ENCODE measurements at regions of chr20 and their contacts with region 1.

Region 1: GRCh38 chr20:56411759-56412472 is at the start of gene CASS4:
- DNase-seq: peak; percentile 63 to 74 (median 68)
- H3K4me3 ChIP-seq: peak within 1 kb of the TSS; percentile 24 to 67
- H3K4me3 Mint-ChIP-seq: peak within 1 kb of the TSS; percentile 90 to 98 (median 94)
- H3K27ac ChIP-seq: peak within 1 kb of the TSS; percentile 80
- H3K27ac Mint-ChIP-seq: peak within 1 kb of the TSS; percentile 94 to 99 (median 98)
- H3K4me1 ChIP-seq: peaks cover 59% of the 10 kb centered on the region
- H3K4me1 Mint-ChIP-seq: peaks cover 33 to 66% (median 48%) of the 10 kb centered on the region in 4 donors
- H3K27me3 ChIP-seq: no peaks in the 10 kb centered on the region
- H3K27me3 Mint-ChIP-seq: no peaks in the 10 kb centered on the region
- total RNA-seq, gene CASS4: 10.8 to 10.9 TPM

Region 2: DNA sequence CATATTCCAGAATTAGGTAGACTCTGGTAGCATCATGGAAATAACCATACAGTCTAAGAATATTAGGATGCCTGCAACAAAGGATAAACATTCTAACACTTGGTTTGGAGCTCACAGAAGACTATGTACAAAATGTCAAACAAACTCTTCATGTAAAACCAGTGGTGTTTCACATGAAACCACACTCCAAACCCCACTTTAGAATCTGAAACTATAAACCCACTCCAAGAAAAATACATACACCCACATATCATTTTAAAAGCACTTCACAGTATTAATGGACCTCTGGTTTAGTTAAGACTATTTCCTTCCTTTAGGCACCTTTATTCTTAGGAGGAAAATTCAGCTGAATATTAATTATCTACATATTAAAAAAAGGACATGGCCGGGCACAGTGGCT is 30.4 kb before region 1 on chr20:
- CTCF ChIA-PET with region 1: no interaction called
- POLR2A ChIA-PET with region 1: no interaction called
- intact Hi-C with region 1: no loop called
- DNase-seq: no peak
- H3K4me3 ChIP-seq: no peak overlapping the region
- H3K4me3 Mint-ChIP-seq: no peak overlapping the region
- H3K27ac ChIP-seq: no peak overlapping the region
- H3K27ac Mint-ChIP-seq: peak overlapping the region in 1 of 7 donors; percentile 0
- H3K4me1 ChIP-seq: no peaks in the 10 kb centered on the region
- H3K4me1 Mint-ChIP-seq: peaks cover 0 to 2% (median under 1%) of the 10 kb centered on the region in 4 donors
- H3K27me3 ChIP-seq: no peaks in the 10 kb centered on the region
- H3K27me3 Mint-ChIP-seq: no peaks in the 10 kb centered on the region

Region 3: GRCh38 chr20:56400090-56400542 is 11.8 kb before region 1 on chr20:
- CTCF ChIA-PET with region 1: interaction called, 21 read pairs
- POLR2A ChIA-PET with region 1: interaction called, 58 read pairs
- intact Hi-C with region 1: no loop called
- DNase-seq: peak; percentile 65 to 70 (median 70)
- H3K4me3 ChIP-seq: no peak overlapping the region
- H3K4me3 Mint-ChIP-seq: no peak overlapping the region
- H3K27ac ChIP-seq: no peak overlapping the region
- H3K27ac Mint-ChIP-seq: peak overlapping the region in 6 of 7 donors; percentile 43 to 84 (median 68)
- H3K4me1 ChIP-seq: peaks cover 15% of the 10 kb centered on the region
- H3K4me1 Mint-ChIP-seq: peaks cover 11 to 30% (median 18%) of the 10 kb centered on the region in 4 donors
- H3K27me3 ChIP-seq: no peaks in the 10 kb centered on the region
- H3K27me3 Mint-ChIP-seq: no peaks in the 10 kb centered on the region

Region 4: DNA sequence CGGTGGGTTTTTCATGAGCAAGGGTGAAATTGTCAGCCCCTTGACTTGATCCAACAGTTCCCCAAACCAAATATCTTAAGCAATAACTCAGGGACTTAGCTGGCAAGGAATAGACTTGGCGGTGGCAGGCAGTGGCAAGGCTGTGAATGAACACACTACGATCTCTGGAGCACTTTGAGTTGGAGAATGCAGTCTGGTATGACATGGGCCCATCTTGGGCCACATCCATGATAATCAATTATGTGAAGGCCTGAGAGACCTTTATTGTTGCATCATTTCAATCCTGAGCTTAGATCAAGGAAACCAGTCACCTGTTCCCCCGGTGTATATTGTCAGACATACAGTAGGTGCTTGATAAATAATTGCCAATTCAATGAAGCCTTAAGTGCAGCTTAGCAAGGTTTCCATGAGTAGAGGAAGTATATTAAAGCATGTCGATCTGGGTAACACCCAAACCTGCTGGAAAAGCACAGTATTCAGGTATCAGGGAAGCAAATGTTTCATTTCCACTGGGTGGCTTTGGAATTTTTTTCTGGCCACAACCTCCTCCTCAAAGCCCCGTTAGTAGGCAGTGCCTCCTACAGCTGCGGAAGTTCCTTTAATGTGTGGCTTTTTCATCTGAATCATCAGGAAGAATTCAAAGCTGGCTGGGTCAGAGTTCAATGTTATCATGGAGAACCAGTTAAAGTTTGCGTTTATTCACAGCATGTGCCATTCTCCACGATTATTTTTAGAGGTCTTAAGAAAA is 10.3 kb after region 1 on chr20:
- CTCF ChIA-PET with region 1: interaction called, 29 read pairs
- POLR2A ChIA-PET with region 1: interaction called, 27 read pairs
- intact Hi-C with region 1: no loop called
- DNase-seq: no peak
- H3K4me3 ChIP-seq: no peak overlapping the region
- H3K4me3 Mint-ChIP-seq: peak overlapping the region in 7 of 8 donors; percentile 9 to 81 (median 50)
- H3K27ac ChIP-seq: peak overlapping the region; percentile 17
- H3K27ac Mint-ChIP-seq: peak overlapping the region; percentile 84 to 97 (median 91)
- H3K4me1 ChIP-seq: peaks cover 66% of the 10 kb centered on the region
- H3K4me1 Mint-ChIP-seq: peaks cover 41 to 81% (median 58%) of the 10 kb centered on the region in 4 donors
- H3K27me3 ChIP-seq: no peaks in the 10 kb centered on the region
- H3K27me3 Mint-ChIP-seq: no peaks in the 10 kb centered on the region

Region 5: DNA sequence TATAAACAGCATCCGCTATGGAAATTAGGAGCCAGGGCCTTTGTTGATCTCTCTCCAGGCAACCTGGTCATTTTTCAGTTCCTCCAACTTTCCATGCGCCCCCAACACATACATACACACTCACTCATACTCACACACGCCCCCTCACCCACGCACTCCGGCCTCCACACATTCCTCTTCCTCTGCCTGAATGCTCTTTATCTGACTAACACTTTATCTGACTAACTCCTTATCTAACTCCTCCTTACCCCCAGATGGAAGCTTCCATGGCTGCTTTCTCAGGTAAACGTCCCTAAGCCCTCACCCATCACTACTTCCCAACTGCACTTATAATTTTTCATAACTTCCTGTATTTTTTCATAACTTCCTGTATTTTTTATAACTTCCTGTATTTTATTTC is 17.6 kb after region 1 on chr20:
- CTCF ChIA-PET with region 1: interaction called, 5 read pairs
- POLR2A ChIA-PET with region 1: interaction called, 23 read pairs
- intact Hi-C with region 1: no loop called
- DNase-seq: no peak
- H3K4me3 ChIP-seq: peak overlapping the region; percentile 58 to 63
- H3K4me3 Mint-ChIP-seq: peak overlapping the region; percentile 78 to 98 (median 92)
- H3K27ac ChIP-seq: peak overlapping the region; percentile 54
- H3K27ac Mint-ChIP-seq: peak overlapping the region; percentile 60 to 98 (median 96)
- H3K4me1 ChIP-seq: peaks cover 56% of the 10 kb centered on the region
- H3K4me1 Mint-ChIP-seq: peaks cover 49 to 89% (median 67%) of the 10 kb centered on the region in 4 donors
- H3K27me3 ChIP-seq: no peaks in the 10 kb centered on the region
- H3K27me3 Mint-ChIP-seq: no peaks in the 10 kb centered on the region

Region 6: GRCh38 chr20:56439771-56440291 is 27.9 kb after region 1 on chr20:
- CTCF ChIA-PET with region 1: interaction called, 4 read pairs
- POLR2A ChIA-PET with region 1: interaction called, 40 read pairs
- intact Hi-C with region 1: loop called (anchors 1 kb)
- DNase-seq: no peak
- H3K4me3 ChIP-seq: no peak overlapping the region
- H3K4me3 Mint-ChIP-seq: peak overlapping the region; percentile 31 to 89 (median 73)
- H3K27ac ChIP-seq: peak overlapping the region; percentile 5
- H3K27ac Mint-ChIP-seq: peak overlapping the region; percentile 86 to 94 (median 89)
- H3K4me1 ChIP-seq: peaks cover 53% of the 10 kb centered on the region
- H3K4me1 Mint-ChIP-seq: peaks cover 31 to 71% (median 50%) of the 10 kb centered on the region in 4 donors
- H3K27me3 ChIP-seq: no peaks in the 10 kb centered on the region
- H3K27me3 Mint-ChIP-seq: no peaks in the 10 kb centered on the region

Region 7: DNA sequence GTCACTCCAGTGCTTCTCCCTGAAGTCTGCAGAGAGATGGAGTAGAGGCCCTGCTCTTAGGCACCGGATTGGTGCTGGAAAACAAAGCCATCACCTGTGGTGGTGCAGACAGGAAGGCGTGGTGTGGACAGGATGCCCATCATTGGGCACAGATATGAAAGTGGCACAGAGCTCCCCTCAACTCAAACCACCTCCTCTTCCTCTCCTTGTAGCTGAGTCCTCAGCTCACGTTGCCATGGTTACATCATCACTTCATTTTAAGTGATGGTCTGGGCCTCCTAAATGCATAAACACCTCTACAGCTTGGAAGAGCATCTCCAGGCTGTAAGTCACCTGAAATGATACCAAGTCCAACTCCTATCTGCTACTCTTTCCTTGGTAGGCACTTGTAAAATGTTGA is 48.5 kb after region 1 on chr20:
- CTCF ChIA-PET with region 1: no interaction called
- POLR2A ChIA-PET with region 1: interaction called, 14 read pairs
- intact Hi-C with region 1: no loop called
- DNase-seq: peak; percentile 75 to 88 (median 85)
- H3K4me3 ChIP-seq: no peak overlapping the region
- H3K4me3 Mint-ChIP-seq: peak overlapping the region in 5 of 8 donors; percentile 55 to 69 (median 56)
- H3K27ac ChIP-seq: peak overlapping the region; percentile 62
- H3K27ac Mint-ChIP-seq: peak overlapping the region; percentile 91 to 97 (median 96)
- H3K4me1 ChIP-seq: peaks cover 51% of the 10 kb centered on the region
- H3K4me1 Mint-ChIP-seq: peaks cover 26 to 64% (median 43%) of the 10 kb centered on the region in 4 donors
- H3K27me3 ChIP-seq: no peaks in the 10 kb centered on the region
- H3K27me3 Mint-ChIP-seq: no peaks in the 10 kb centered on the region

Measured in CD4-positive, alpha-beta memory T cell (primary cell).